Activated CD8-positive, alpha-beta T cell treated with anti-CD3 and anti-CD28 coated beads for 36 hours (primary cell): ENCODE measurements at regions of chr20 and their contacts with region 1.

Region 1: DNA sequence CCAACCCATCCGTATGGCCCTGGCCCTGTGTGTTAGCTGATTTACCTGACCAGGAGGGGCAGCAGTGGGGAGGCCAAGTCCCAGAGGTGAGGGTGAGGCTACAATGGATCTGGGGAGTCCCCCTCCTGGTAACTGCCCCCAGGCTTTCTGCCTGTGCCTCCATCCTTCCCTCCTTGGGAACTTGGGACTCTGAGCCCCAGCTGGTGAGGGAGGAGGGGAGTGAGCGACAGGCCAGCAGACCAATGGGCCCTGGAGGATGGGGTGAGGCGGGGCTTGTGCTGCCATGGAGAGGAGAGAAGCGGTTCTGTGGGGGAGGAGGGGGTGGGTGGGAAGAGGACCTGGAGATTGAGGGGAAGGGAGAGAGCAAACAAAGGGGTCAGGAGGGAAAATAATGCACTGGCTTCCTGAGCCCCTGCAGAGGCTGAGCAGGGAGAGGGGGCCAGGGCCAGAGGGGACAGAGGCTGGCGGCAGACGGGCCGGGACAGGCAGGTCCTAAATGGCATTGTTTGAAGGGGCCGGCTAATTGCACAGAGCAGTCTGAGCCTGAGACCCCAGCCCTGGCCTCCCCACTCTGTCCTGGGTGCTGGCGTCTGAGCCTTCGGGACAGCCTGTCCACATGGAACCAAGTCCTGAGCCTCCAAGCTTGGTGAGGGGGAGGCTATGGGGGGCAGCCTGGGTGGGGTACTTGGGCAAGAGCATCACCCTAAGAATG is 17.5 kb downstream of the DNMT3B start:
- DNase-seq: no peak
- ATAC-seq: no peak
- H3K4me3 Mint-ChIP-seq: no peak overlapping the region
- H3K27ac Mint-ChIP-seq: no peak overlapping the region
- H3K4me1 Mint-ChIP-seq: peaks cover 24% of the 10 kb centered on the region
- H3K27me3 Mint-ChIP-seq: no peaks in the 10 kb centered on the region
- CTCF ChIP-seq: no peak

Region 2: GRCh38 chr20:32664678-32665159 is 114.9 kb before region 1 on chr20:
- CTCF ChIA-PET with region 1: interaction called, 31 read pairs
- POLR2A ChIA-PET with region 1: interaction called, 4 read pairs
- intact Hi-C with region 1: no loop called
- DNase-seq: peak; percentile 27
- ATAC-seq: peak; percentile 72
- H3K4me3 Mint-ChIP-seq: no peak overlapping the region
- H3K27ac Mint-ChIP-seq: no peak overlapping the region
- H3K4me1 Mint-ChIP-seq: peaks cover 6% of the 10 kb centered on the region
- H3K27me3 Mint-ChIP-seq: no peaks in the 10 kb centered on the region
- CTCF ChIP-seq: no peak

Region 3: DNA sequence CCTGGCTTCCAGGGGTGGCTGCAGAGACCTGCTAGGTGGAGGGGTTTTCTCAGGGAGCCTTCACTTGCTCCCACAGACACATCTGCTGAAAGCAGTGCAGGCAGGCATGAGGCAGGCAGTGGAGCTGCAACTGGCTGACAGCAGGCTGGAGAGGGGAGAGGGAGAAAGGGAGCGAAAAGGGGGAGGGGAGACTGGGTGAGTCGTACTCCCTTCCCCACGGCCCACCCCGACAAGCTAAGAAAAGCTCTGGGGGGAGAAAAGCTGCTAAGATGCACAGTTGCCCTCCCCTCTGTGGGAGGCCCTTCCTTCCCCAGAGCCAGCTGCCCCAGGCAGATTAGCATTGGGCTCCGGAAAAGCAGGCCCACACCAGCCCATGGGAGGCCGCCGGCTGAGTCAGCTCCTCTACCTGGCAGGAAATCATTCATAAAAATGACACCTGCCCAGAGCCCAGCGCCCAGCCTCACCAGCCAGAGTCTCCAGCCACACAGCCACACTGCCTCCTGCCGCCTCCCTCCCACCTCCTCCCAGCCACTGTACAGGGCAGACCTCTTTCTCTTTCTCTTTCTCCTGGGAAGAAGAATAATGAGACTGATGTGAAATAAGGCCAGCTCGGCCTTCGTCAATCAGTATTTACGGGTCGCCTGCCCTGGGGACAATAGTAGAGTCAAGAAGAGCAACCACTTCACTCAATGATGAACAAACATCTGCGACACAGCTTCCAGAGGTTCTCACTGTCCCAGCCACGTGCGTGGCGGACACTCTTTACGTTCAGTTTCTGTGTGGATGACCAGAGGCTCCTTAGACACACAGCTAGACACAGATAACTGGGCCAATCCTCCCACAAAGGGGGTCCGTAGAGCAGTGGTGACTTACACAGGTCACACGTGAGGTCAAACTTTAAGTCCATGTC is 98.2 kb before region 1 on chr20:
- CTCF ChIA-PET with region 1: interaction called, 356 read pairs
- POLR2A ChIA-PET with region 1: no interaction called
- intact Hi-C with region 1: no loop called
- DNase-seq: peak; percentile 56
- ATAC-seq: peak; percentile 70
- H3K4me3 Mint-ChIP-seq: no peak overlapping the region
- H3K27ac Mint-ChIP-seq: peak overlapping the region; percentile 44
- H3K4me1 Mint-ChIP-seq: peaks cover 16% of the 10 kb centered on the region
- H3K27me3 Mint-ChIP-seq: no peaks in the 10 kb centered on the region
- CTCF ChIP-seq: no peak

Region 4: GRCh38 chr20:32731393-32732266 is 48.0 kb before region 1 on chr20:
- CTCF ChIA-PET with region 1: interaction called, 13 read pairs
- POLR2A ChIA-PET with region 1: interaction called, 3 read pairs
- intact Hi-C with region 1: no loop called
- DNase-seq: no peak
- ATAC-seq: peak; percentile 42
- H3K4me3 Mint-ChIP-seq: no peak overlapping the region
- H3K27ac Mint-ChIP-seq: peak overlapping the region; percentile 46
- H3K4me1 Mint-ChIP-seq: peaks cover 21% of the 10 kb centered on the region
- H3K27me3 Mint-ChIP-seq: no peaks in the 10 kb centered on the region
- CTCF ChIP-seq: no peak

Region 5: GRCh38 chr20:32743237-32744112 is 36.2 kb before region 1 on chr20 and contains the start of gene COMMD7:
- CTCF ChIA-PET with region 1: interaction called, 25 read pairs
- POLR2A ChIA-PET with region 1: interaction called, 5 read pairs
- intact Hi-C with region 1: no loop called
- DNase-seq: peak; percentile 91
- ATAC-seq: peak; percentile 87
- H3K4me3 Mint-ChIP-seq: peak within 1 kb of the TSS; percentile 94
- H3K27ac Mint-ChIP-seq: peak within 1 kb of the TSS; percentile 94
- H3K4me1 Mint-ChIP-seq: peaks cover 28% of the 10 kb centered on the region
- H3K27me3 Mint-ChIP-seq: no peaks in the 10 kb centered on the region
- CTCF ChIP-seq: no peak
- total RNA-seq, gene COMMD7: 30.7 to 34.0 TPM

Region 6: GRCh38 chr20:32767418-32768198 is 12.0 kb before region 1 on chr20:
- CTCF ChIA-PET with region 1: interaction called, 38 read pairs
- POLR2A ChIA-PET with region 1: interaction called, 3 read pairs
- intact Hi-C with region 1: no loop called
- DNase-seq: no peak
- ATAC-seq: no peak
- H3K4me3 Mint-ChIP-seq: no peak overlapping the region
- H3K27ac Mint-ChIP-seq: no peak overlapping the region
- H3K4me1 Mint-ChIP-seq: peaks cover 21% of the 10 kb centered on the region
- H3K27me3 Mint-ChIP-seq: no peaks in the 10 kb centered on the region
- CTCF ChIP-seq: no peak

Region 7: GRCh38 chr20:32796981-32797451 is 17.4 kb after region 1 on chr20:
- CTCF ChIA-PET with region 1: interaction called, 49 read pairs
- POLR2A ChIA-PET with region 1: interaction called, 3 read pairs
- intact Hi-C with region 1: no loop called
- DNase-seq: no peak
- ATAC-seq: no peak
- H3K4me3 Mint-ChIP-seq: no peak overlapping the region
- H3K27ac Mint-ChIP-seq: peak overlapping the region; percentile 18
- H3K4me1 Mint-ChIP-seq: peaks cover 36% of the 10 kb centered on the region
- H3K27me3 Mint-ChIP-seq: no peaks in the 10 kb centered on the region
- CTCF ChIP-seq: no peak